Activated naive CD4-positive, alpha-beta T cell treated with anti-CD3 and anti-CD28 coated beads for 36 hours (primary cell): ENCODE measurements at regions of chr20 and their contacts with region 1.

Region 1: GRCh38 chr20:61251529-61252393 is at the start of gene CDH4:
- DNase-seq: no peak
- H3K4me3 Mint-ChIP-seq: no peak within 1 kb of the TSS
- H3K27ac Mint-ChIP-seq: no peak within 1 kb of the TSS
- H3K4me1 Mint-ChIP-seq: peaks cover 2% of the 10 kb centered on the region
- H3K27me3 Mint-ChIP-seq: peaks cover 55% of the 10 kb centered on the region
- total RNA-seq, gene CDH4: 0.10 to 0.15 TPM

Region 2: GRCh38 chr20:61234008-61234802 is 17.6 kb before region 1 on chr20:
- CTCF ChIA-PET with region 1: interaction called, 10 read pairs
- intact Hi-C with region 1: no loop called
- DNase-seq: no peak
- H3K4me3 Mint-ChIP-seq: no peak overlapping the region
- H3K27ac Mint-ChIP-seq: no peak overlapping the region
- H3K4me1 Mint-ChIP-seq: no peaks in the 10 kb centered on the region
- H3K27me3 Mint-ChIP-seq: peaks cover 19% of the 10 kb centered on the region

Region 3: GRCh38 chr20:61303697-61304096 is 51.9 kb after region 1 on chr20:
- CTCF ChIA-PET with region 1: no interaction called
- intact Hi-C with region 1: no loop called
- DNase-seq: no peak
- H3K4me3 Mint-ChIP-seq: no peak overlapping the region
- H3K27ac Mint-ChIP-seq: no peak overlapping the region
- H3K4me1 Mint-ChIP-seq: no peaks in the 10 kb centered on the region
- H3K27me3 Mint-ChIP-seq: no peaks in the 10 kb centered on the region